Panc1 (cell line): ENCODE measurements at regions of chr7 and their contacts with region 1.

Region 1: DNA sequence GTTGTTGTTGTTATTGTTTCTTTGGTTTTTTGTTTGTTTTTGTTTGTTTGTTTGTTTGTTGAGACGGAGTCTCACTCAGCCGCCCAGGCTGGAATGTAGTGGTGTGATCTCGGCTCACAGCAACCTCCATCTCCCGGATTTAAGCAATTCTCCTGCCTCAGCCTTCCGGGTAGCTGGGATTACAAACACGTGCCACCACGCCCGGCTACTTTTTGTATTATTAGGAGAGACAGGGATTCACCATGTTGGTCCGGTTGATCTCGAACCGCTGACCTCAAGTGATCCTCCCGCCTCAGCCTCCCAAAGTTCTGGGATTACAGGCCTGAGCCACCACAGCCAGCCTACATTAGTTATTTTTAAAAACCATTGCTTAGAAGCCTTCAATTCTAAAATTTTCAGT is 45.0 kb downstream of the FOXP2 start:
- DNase-seq: no peak
- ATAC-seq: no peak
- H3K4me3 ChIP-seq: no peak overlapping the region
- H3K27ac ChIP-seq: no peak overlapping the region
- H3K4me1 ChIP-seq: no peaks in the 10 kb centered on the region
- H3K27me3 ChIP-seq: no peaks in the 10 kb centered on the region; the same call in 1 of the 2 replicates
- CTCF ChIP-seq: no peak

Region 2: DNA sequence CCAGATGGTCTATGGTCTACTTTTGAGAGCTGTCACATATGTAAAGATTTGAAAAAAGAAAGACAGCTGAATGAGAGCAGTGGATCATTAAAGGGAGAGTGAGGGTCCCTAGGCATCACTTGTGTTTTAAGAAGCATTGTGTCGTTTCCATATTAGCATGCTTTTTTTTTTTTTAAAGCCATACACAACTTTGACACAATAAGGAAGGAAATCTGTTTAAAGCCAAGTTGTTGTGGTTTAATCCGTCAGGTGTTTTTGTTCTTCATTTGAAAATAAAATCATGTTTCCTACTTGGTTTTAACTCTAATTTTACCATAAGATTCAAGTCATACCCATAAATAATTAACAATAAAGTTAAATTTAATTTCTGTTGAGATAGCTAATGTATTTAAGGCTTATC is 515.8 kb after region 1 on chr7:
- CTCF ChIA-PET with region 1: interaction called, 11 read pairs
- POLR2A ChIA-PET with region 1: no interaction called
- in situ Hi-C with region 1: no loop called
- intact Hi-C with region 1: no loop called
- DNase-seq: no peak
- ATAC-seq: no peak
- H3K4me3 ChIP-seq: no peak overlapping the region
- H3K27ac ChIP-seq: no peak overlapping the region
- H3K4me1 ChIP-seq: no peaks in the 10 kb centered on the region
- H3K27me3 ChIP-seq: no peaks in the 10 kb centered on the region
- CTCF ChIP-seq: no peak